ENCODE measurements at regions of chr11 and their contacts with region 1.

Region 1: GRCh38 chr11:11621573-11622319 is at the start of gene GALNT18:
- DNase-seq: peak; percentile 67 to 78
- ATAC-seq: peak; percentile 97 to 98 (median 98)
- H3K4me3 ChIP-seq: peak within 1 kb of the TSS; percentile 42
- H3K4me3 Mint-ChIP-seq: peak within 1 kb of the TSS; percentile 89
- H3K27ac ChIP-seq: no peak within 1 kb of the TSS
- H3K27ac Mint-ChIP-seq: peak within 1 kb of the TSS in 1 of 2 donors; percentile 53
- H3K4me1 ChIP-seq: peaks cover 15% of the 10 kb centered on the region
- H3K4me1 Mint-ChIP-seq: peaks cover 0 to 4% of the 10 kb centered on the region in 2 donors
- H3K27me3 ChIP-seq: peaks cover 13% of the 10 kb centered on the region
- H3K27me3 Mint-ChIP-seq: peaks cover 25 to 29% of the 10 kb centered on the region in 2 donors
- CTCF ChIP-seq: peak; percentile 16
- total RNA-seq, gene GALNT18: 0.18 to 0.42 (median 0.38) TPM

Region 2: DNA sequence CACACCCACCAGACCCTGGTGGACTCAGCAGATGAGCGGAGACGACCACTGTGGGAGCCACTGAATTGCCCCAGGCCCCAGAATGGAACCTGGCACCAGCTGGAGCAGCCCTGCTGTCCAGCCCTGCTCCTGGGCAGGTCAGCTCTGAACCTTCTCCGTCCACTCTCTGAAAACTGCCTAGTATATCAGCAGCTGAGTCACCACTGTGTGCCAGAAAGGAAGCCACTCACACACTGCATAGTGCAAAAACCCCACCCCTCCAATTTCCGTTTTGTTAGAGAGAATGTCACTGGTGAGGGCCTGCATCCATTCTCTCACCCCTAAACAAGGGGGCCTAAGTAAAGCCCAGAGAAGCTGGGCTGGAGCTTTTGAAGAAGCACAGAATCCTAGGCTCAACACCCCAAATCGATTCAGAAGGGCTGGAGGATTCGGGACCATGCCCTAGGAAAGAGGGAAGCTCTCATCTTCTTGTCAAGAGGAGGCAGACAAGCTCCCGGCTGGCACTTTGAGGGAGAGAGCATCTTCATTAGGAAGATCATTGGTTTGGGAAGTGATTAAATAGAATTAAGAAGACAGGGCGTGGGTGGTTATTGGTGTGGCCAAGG is 44.4 kb before region 1 on chr11:
- intact Hi-C with region 1: loop called (anchors 5 kb)
- DNase-seq: peak; percentile 8 to 35
- ATAC-seq: peak; percentile 90 to 98 (median 96)
- H3K4me3 ChIP-seq: no peak overlapping the region
- H3K4me3 Mint-ChIP-seq: peak overlapping the region; percentile 71
- H3K27ac ChIP-seq: peak overlapping the region; percentile 80
- H3K27ac Mint-ChIP-seq: peak overlapping the region; percentile 94
- H3K4me1 ChIP-seq: peaks cover 22% of the 10 kb centered on the region
- H3K4me1 Mint-ChIP-seq: peaks cover 32 to 39% of the 10 kb centered on the region in 2 donors
- H3K27me3 ChIP-seq: no peaks in the 10 kb centered on the region
- H3K27me3 Mint-ChIP-seq: no peaks in the 10 kb centered on the region
- CTCF ChIP-seq: no peak

Region 3: DNA sequence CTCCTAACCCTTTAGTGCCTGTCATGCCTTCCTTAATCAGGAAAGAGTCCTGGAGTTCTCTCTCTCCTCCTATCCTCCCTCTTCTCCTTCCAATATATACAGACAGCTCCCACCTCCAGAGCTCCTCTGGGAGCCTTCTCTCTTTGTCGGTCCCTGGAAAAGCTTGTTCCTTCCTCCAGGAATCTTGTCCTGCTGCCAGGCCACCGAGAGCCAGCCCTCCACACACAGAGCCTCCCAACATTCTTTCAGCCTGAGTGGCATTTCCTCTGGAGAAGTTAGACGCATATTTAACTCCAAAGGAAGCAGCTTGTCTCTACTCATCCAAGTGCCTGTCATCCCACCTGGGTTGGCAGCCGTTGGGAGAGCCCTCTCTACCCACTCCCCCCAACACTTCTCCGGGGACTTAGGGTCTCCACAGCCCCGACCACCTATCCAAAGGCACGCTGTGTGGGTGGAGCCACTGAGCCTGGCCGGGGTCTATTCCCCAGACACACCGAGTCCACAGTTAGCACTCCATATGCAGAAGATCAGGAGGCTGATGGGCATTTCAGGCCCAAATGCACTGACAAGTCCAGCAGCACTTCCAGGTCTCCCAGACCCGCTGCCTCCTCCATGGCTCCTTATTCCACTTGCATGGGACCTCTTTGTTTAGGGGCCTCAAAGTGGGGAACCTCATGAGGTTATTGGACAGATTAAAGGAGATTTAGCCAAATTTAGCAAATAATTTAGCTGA is 355.6 kb after region 1 on chr11:
- intact Hi-C with region 1: no loop called
- DNase-seq: no peak
- ATAC-seq: no peak
- H3K4me3 ChIP-seq: no peak overlapping the region
- H3K4me3 Mint-ChIP-seq: no peak overlapping the region
- H3K27ac ChIP-seq: no peak overlapping the region
- H3K27ac Mint-ChIP-seq: no peak overlapping the region
- H3K4me1 ChIP-seq: peaks cover 4% of the 10 kb centered on the region
- H3K4me1 Mint-ChIP-seq: no peaks in the 10 kb centered on the region
- H3K27me3 ChIP-seq: no peaks in the 10 kb centered on the region
- H3K27me3 Mint-ChIP-seq: no peaks in the 10 kb centered on the region
- CTCF ChIP-seq: no peak